HAP-1 (cell line): ENCODE measurements at regions of chr6 and their contacts with region 1.

Region 1: DNA sequence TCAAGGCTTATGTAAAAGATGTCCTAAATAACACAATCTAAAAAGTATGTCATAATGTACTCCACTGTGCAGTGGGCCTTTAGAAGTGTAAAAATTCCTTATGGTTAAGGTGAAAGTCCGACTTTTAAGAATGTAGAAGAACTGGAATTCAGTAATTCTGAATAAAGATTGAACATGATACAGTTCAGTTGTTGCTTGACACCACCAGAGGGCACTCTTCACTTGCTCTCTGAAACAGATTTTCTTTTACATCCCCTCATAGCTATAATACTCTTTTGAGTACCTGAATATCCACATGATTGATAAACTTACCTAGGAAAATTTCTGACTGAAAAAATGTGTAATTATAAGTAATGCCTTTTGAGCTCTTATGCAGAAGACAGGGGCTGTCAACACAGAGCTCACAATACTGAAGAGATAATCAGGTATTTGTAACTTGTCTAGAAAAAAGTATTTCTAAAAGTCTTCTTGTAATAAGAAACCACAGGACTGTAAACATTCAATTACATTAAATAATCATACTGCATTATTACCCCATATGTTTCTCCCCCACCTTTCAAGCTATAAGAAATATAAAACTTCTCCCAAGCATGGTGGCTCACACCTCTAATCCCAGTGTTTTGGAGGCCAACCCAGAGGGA is 92.1 kb downstream of the POPDC3 start:
- DNase-seq: peak; percentile 47 to 83
- H3K4me3 ChIP-seq: no peak overlapping the region
- H3K4me1 ChIP-seq: no peaks in the 10 kb centered on the region
- H3K27me3 ChIP-seq: no peaks in the 10 kb centered on the region

Region 2: DNA sequence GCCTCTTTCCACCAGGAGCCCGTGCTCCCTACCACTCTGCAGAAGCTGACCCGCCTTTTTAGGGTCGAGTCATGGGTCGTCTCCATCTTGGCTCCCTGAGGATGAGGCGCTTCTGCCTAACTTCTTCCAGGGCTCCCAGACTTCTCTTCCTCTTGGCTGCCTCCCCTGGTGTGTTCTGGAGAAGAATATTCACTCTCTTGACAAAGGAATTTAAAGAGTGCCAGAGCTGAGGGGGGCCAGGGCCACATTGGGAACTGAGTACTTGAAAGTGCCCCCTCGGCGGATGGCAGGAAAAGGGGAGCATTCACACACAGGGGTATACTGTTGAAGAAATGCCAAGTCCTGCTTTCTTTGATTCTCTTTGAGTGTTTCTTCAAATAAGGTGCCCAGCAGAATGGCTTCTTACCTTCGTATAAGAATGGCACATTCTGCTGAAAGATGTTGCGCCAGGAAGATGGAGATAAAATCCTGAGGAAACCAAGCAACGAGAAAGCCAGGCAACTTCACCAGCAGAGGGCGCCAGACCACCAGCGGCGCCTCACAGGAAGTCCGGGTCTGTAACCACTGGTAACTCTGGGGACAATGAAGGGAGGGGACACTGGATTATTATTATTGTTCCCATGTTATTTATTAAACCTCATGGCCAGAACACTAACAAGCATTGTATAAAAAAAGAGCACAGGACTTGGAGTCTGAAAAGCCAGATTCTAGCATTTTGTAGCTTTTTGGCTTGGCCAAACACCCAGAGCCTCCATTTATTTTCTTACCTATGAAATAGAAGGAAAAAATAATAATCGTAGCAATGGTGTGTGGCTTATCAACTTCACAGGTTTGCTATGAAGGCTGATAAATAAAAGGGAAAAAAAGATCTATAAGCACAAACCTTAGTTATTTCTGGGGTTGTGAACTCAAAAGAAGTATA is 404.7 kb before region 1 on chr6:
- in situ Hi-C with region 1: loop called (anchors 25 kb)
- DNase-seq: peak; percentile 65 to 87
- H3K4me3 ChIP-seq: no peak overlapping the region
- H3K4me1 ChIP-seq: peaks cover 7% of the 10 kb centered on the region; the same call in 1 of the 2 replicates
- H3K27me3 ChIP-seq: no peaks in the 10 kb centered on the region

Region 3: GRCh38 chr6:105301072-105301503 is 213.4 kb after region 1 on chr6:
- in situ Hi-C with region 1: no loop called
- DNase-seq: no peak
- H3K4me3 ChIP-seq: no peak overlapping the region
- H3K4me1 ChIP-seq: peaks cover 13% of the 10 kb centered on the region
- H3K27me3 ChIP-seq: no peaks in the 10 kb centered on the region

Region 4: DNA sequence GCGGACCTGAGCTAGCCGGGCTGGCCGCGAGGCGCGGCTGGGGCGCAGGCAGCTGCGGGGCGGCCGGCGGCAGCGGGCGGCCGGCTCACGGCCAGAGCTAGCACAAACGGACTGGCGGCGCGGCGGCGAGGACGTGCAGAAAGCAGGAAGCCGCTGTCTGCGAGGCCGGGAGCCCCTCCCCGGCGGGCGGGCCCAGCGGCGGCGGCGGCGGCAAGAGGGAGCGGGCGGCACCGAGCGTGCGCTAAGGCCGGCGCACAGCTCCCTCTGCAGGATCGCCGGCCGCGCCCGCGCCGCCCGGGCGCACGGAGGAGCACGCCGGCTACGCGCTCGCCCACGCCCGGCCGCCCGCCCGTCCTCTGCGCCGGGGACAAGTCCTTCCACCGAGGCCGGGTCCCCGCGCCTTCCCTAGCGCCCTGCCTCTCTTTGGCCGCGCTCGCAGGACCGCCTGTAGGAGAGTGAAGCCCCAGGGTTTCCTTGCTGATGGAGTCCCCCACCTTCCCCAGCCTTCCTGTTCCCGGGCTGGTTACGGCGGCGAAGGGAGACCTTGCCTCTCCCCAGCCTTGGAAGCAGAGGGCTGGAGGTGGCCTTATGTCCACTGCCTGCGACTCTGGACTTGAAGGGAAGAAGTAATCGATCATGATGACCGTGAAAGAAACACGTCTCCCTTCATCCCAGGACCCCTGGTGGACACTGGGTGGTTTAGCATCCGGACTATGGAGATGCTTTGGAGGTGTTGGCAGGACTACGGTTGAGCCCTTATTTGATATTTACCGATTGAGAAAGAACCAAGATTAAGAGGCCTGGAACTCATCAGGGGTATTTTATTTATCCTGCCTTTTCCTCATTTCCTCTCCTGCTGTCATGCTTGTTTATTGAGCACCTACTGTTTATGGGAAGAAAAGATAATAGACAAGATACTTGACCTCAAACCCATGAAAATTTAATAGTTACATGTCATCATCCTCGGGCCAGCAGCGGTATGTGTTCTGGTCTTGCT is 315.5 kb after region 1 on chr6 and contains the start of gene PREP:
- in situ Hi-C with region 1: loop called (anchors 5 kb)
- DNase-seq: peak; percentile 70 to 87
- H3K4me3 ChIP-seq: peak within 1 kb of the TSS; percentile 90
- H3K4me1 ChIP-seq: peaks cover 15% of the 10 kb centered on the region
- H3K27me3 ChIP-seq: no peaks in the 10 kb centered on the region